ENCODE measurements at regions of chr7 and their contacts with region 1.

Region 1: DNA sequence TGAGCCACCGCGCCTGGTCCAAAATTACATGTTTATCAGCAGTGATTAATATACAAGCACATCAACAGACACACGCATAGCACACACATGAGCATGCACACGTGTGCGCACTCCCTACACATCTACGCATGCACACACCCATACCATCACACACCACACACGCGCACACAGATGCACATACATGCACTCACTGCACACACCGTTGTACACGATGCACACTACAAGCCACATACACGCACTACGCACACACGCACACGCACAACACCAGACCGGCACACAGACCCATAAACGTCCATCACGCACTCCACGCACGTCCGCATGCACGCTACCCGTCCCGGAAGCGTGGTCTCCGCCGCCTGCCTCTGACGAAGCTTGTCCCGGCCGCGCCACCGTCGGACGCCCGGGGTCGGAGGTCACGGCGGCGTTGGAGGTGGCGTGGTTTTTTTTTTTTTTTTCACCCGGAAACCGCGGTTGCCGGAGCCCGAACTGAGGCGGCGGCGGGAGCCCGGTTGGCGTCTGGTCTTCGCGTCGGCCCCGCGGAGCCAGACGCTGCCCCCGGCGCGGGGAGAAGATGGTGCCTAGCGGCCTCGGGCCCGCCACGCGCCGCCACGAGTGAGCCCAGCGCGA is at the start of gene TMEM248:
- DNase-seq: peak; percentile 82
- ATAC-seq: peak; percentile 96
- H3K4me3 ChIP-seq: peak within 1 kb of the TSS; percentile 72 to 98
- H3K27ac ChIP-seq: peak within 1 kb of the TSS; percentile 87
- H3K4me1 ChIP-seq: peaks cover 13% of the 10 kb centered on the region
- H3K27me3 ChIP-seq: no peaks in the 10 kb centered on the region
- CTCF ChIP-seq: no peak
- total RNA-seq, gene TMEM248: 176 TPM

Region 2: DNA sequence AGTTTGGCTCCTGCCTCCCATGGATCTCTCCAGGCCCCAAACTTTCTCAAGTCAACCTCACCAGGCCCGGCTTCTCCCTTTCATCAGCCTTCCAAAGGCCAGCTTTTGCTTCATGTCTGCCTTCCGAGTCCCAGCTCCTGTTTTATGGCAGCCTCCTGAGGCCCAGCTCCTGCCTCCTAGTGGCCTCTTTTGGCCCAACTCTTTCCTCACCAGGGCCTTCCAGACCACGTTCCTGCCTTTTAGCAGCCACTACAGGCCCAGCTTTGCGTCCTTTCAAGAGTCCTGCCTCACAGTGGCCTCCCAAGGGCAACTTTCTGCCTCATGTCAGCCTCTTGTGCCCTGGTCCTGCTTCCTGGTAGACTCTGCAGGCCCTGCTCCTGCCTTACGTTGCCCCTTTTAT is 15.2 kb before region 1 on chr7:
- CTCF ChIA-PET with region 1: interaction called, 6 read pairs
- POLR2A ChIA-PET with region 1: interaction called, 16 read pairs
- in situ Hi-C with region 1: no loop called
- intact Hi-C with region 1: no loop called
- DNase-seq: no peak
- ATAC-seq: no peak
- H3K4me3 ChIP-seq: no peak overlapping the region
- H3K27ac ChIP-seq: no peak overlapping the region
- H3K4me1 ChIP-seq: no peaks in the 10 kb centered on the region
- H3K27me3 ChIP-seq: no peaks in the 10 kb centered on the region
- CTCF ChIP-seq: peak; percentile 27; the same call in 1 of the 2 replicates

Region 3: DNA sequence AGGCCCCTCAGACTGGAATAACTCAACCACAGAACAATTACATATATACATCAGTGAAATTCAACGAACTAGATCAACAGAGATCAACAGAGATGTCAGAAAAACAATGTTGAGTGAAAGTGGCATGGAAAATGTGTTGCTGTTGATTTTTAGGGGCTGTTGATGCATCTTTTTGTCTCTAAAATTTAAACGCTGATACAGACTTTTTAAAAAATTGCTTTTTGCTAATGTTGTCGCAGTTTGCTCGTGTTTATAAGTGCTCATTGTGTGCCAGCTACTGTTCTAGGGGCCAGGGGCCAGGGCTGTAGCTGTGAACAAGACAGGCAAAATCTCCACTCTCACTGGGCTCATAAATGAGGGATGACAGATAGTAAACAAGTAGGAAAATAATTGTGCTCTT is 18.4 kb after region 1 on chr7:
- CTCF ChIA-PET with region 1: no interaction called
- POLR2A ChIA-PET with region 1: interaction called, 11 read pairs
- in situ Hi-C with region 1: no loop called
- intact Hi-C with region 1: no loop called
- DNase-seq: no peak
- ATAC-seq: no peak
- H3K4me3 ChIP-seq: no peak overlapping the region
- H3K27ac ChIP-seq: no peak overlapping the region
- H3K4me1 ChIP-seq: no peaks in the 10 kb centered on the region
- H3K27me3 ChIP-seq: no peaks in the 10 kb centered on the region
- CTCF ChIP-seq: no peak

Measured in Panc1 (cell line).